ENCODE measurements at regions of chr2 and their contacts with region 1.

Region 1: DNA sequence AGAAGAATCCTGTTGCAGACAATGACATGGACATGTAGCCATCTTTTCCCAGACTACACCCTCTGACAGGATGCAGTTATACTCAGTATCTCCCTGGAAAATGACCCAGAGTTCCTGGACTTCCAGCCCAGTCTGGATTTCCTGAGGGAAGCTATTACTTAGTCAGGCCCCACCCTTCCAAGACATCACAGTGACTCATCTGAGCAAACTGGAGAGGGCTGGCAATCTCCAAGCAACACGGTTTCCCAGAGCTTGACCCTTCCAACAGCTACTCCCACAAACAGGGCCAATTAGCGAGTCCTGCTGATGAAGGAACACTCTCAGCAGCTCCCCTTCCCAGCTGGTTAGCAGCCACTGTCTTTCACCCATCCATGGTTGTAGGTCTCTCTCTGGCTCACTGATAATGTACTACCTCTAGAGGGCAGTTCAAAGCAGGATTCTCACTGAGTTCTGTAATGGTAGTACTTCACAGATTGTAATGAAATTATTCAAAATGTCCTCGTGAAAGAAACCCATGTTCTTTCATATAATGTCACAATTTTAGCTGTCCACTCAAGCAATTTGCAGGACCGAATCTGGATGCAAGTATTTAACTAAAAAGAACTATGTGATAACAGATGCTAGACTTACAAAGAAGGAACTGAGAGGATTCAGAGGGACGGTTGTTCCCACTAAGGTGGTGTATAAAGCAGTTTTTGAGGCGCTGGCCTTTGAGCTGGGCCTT is 110.2 kb downstream of the MDH1 start:
- DNase-seq: peak; percentile 92
- H3K4me3 Mint-ChIP-seq: peak overlapping the region; percentile 5
- H3K27ac Mint-ChIP-seq: peak overlapping the region; percentile 57
- H3K4me1 Mint-ChIP-seq: peaks cover 22% of the 10 kb centered on the region
- H3K27me3 Mint-ChIP-seq: no peaks in the 10 kb centered on the region
- CTCF ChIP-seq: peak; percentile 47

Region 2: GRCh38 chr2:63588385-63589147 is 110.4 kb before region 1 on chr2 and contains the starts of genes MDH1 and WDPCP:
- CTCF ChIA-PET with region 1: no interaction called
- POLR2A ChIA-PET with region 1: interaction called, 18 read pairs
- intact Hi-C with region 1: no loop called
- DNase-seq: peak; percentile 99
- H3K4me3 Mint-ChIP-seq: peak within 1 kb of the TSS; percentile 98
- H3K27ac Mint-ChIP-seq: peak within 1 kb of the TSS; percentile 94
- H3K4me1 Mint-ChIP-seq: peaks cover 19% of the 10 kb centered on the region
- H3K27me3 Mint-ChIP-seq: no peaks in the 10 kb centered on the region
- CTCF ChIP-seq: no peak
- total RNA-seq, gene MDH1: 105 and 110 TPM in 2 replicates
- total RNA-seq, gene WDPCP: 6.9 and 8.0 TPM in 2 replicates

Region 3: GRCh38 chr2:63736354-63736753 is 37.4 kb after region 1 on chr2:
- CTCF ChIA-PET with region 1: interaction called, 18 read pairs
- POLR2A ChIA-PET with region 1: interaction called, 62 read pairs
- intact Hi-C with region 1: no loop called
- DNase-seq: no peak
- H3K4me3 Mint-ChIP-seq: no peak overlapping the region
- H3K27ac Mint-ChIP-seq: peak overlapping the region; percentile 37
- H3K4me1 Mint-ChIP-seq: peaks cover 50% of the 10 kb centered on the region
- H3K27me3 Mint-ChIP-seq: no peaks in the 10 kb centered on the region
- CTCF ChIP-seq: no peak

Region 4: GRCh38 chr2:63790913-63791312 is 91.9 kb after region 1 on chr2:
- CTCF ChIA-PET with region 1: interaction called, 3 read pairs
- POLR2A ChIA-PET with region 1: interaction called, 51 read pairs
- intact Hi-C with region 1: no loop called
- DNase-seq: peak; percentile 78
- H3K4me3 Mint-ChIP-seq: peak overlapping the region; percentile 51
- H3K27ac Mint-ChIP-seq: peak overlapping the region; percentile 83
- H3K4me1 Mint-ChIP-seq: peaks cover 35% of the 10 kb centered on the region
- H3K27me3 Mint-ChIP-seq: no peaks in the 10 kb centered on the region
- CTCF ChIP-seq: no peak

Region 5: DNA sequence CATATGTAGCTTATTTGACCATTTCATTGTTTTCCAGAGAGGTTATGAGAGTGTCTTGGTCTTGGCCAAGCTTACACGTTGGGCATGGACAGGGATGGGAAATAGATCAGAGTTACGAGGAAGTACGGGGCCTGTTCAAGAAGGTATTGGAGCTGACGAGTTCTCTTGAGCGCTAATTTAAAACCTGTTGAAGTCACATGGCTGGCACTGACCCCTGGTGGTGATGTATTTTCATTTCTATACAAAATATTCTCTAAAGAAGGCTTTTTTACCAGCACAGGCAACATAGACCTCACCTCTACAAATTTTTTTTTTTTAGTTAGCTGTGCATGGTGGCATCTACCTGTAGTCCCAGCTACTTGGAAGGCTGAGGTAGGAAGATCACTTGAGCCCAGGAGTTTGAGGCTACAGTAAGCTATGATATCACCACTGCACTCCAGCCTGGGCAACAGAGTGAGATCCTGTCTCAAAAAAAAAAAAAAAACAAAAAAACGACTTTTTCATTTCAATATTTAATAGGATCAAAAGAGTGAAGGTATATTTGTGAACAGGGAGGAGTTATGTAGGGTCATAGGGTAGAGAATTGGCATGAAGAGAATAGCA is 162.3 kb after region 1 on chr2:
- CTCF ChIA-PET with region 1: interaction called, 114 read pairs
- POLR2A ChIA-PET with region 1: interaction called, 22 read pairs
- intact Hi-C with region 1: no loop called
- DNase-seq: peak; percentile 67
- H3K4me3 Mint-ChIP-seq: no peak overlapping the region
- H3K27ac Mint-ChIP-seq: peak overlapping the region; percentile 69
- H3K4me1 Mint-ChIP-seq: peaks cover 22% of the 10 kb centered on the region
- H3K27me3 Mint-ChIP-seq: no peaks in the 10 kb centered on the region
- CTCF ChIP-seq: peak; percentile 60

Region 6: DNA sequence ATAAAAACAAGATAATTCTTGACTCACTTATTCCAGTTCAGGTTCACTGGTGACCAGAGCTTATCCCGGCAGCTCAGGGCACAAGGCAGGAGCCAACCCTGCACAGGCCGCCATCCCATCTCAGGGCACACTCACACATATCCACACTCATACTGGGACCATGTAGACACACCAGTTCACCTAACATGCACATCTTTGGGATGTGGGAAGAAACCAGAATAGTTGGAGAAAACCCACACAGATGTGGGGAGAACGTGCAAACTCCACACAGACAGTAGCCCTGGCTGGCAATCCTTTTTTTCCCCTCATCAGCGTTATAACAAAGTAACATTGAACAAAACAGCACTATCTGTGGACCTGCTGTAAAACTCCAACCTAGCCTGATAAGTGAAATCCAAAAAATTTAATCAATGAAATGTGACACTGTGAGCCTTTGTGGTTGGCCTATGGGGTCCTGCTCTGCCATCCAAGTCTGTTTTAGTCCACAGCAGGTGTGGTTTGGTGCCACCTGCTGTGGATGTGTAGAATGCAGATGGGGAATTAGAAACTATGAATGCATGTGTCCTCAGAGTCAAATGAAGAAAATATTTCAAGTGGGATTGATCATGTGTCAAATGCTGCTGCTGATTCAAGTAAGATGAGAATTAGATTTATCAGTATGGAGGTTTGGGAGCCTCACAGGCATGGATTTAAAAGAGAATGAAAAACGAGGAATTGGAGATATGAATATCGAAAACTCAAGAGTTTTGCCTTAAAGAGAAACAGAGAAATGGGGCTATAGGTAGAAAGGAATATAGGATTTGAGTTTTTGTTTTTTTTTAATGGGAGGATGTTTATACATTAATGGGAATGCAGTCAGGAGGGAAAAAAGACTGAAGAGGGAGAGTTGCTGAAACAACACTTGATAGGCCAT is 189.8 kb after region 1 on chr2:
- CTCF ChIA-PET with region 1: interaction called, 12 read pairs
- POLR2A ChIA-PET with region 1: interaction called, 7 read pairs
- intact Hi-C with region 1: no loop called
- DNase-seq: peak; percentile 67
- H3K4me3 Mint-ChIP-seq: no peak overlapping the region
- H3K27ac Mint-ChIP-seq: peak overlapping the region; percentile 17
- H3K4me1 Mint-ChIP-seq: peaks cover 5% of the 10 kb centered on the region
- H3K27me3 Mint-ChIP-seq: no peaks in the 10 kb centered on the region
- CTCF ChIP-seq: peak; percentile 71

Region 7: DNA sequence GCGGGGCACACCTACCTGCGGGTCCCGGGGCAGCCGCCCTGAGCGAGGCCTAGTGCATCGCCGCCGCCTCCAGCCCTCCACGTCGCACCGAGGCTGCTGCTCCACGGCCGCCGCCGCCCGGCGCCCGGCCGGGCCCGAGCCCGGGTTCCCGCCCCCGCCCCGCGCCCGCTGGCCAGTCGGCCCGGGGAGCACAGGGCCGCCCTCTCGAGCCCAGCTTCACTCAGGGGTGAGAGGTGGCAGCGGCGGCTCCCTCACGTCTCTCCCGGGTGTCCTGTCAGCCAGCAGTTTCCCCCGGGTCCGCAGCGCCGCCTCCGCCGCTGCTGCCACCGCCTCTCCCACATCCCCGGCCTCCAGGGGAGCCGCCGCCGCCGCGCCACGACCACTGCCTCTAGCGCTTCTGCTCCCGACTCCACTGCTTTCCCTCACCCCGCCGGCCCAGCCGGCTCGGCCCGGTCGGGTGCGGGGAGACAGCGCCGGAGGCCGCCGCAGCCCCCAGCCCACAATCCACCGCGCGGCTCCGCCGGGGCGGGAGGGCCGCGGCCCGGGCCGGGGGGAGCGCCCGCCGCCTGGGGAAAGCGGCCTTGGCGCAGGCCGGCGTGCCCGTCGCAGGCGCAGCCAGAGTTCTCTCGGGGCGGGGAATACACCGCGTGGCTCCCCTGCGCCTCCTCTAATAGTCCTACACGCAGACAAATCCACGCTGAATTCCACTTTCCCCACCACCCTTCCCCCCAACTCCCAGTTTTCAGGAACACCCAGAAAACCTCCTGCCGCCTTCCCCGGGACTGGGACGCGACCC is 320.1 kb after region 1 on chr2 and contains the start of gene VPS54:
- CTCF ChIA-PET with region 1: no interaction called
- POLR2A ChIA-PET with region 1: interaction called, 5 read pairs
- intact Hi-C with region 1: loop called (anchors 10 kb)
- DNase-seq: peak; percentile 50
- H3K4me3 Mint-ChIP-seq: peak within 1 kb of the TSS; percentile 96
- H3K27ac Mint-ChIP-seq: peak within 1 kb of the TSS; percentile 98
- H3K4me1 Mint-ChIP-seq: peaks cover 21% of the 10 kb centered on the region
- H3K27me3 Mint-ChIP-seq: no peaks in the 10 kb centered on the region
- CTCF ChIP-seq: no peak
- total RNA-seq, gene VPS54: 13.1 and 16.5 TPM in 2 replicates